Right ventricle myocardium inferior (tissue), 1 donor: ENCODE measurements at regions of chr9 and their contacts with region 1.

Region 1: GRCh38 chr9:13971966-13972655 is 341.8 kb downstream of the NFIB start:
- DNase-seq: no peak
- ATAC-seq: no peak

Region 2: GRCh38 chr9:13705918-13706317 is 266.2 kb before region 1 on chr9:
- intact Hi-C with region 1: loop called (anchors 10 kb)
- DNase-seq: no peak
- ATAC-seq: peak; percentile 97

Region 3: DNA sequence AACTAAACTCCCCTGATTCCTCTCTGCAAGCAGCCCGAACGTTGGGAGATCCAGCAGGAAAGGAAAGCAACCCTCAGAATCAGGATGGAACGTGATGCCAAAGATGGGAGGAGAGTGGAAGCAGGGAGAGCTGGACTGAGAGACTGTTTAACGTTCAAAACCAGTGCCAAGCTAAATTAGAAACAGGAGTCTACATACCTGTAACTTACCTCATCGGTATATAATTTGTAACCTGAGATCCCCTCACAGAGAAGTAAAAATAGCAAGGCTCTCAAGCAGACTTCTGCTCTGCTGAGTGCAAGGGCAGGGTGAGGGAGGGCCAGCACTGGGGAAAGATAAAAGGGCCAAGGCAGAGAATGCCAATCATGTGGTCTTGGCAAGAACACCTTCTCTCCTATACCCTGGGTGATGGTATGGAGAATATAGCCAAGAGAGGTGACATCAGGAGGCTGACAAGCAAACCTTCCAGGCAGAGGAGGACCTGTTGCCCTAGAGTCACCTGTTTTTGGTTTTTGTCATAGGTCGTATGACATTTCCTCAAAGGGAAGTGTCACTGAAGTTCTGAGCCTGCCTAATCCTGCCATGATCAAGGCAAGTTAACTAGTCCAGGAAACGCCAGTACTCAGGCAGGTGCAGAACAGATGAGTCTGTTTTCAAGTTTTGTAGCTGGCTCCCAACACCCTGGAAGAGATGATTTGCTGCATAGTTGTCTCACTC is 130.2 kb before region 1 on chr9:
- intact Hi-C with region 1: no loop called
- DNase-seq: peak; percentile 49
- ATAC-seq: peak; percentile 92

Region 4: GRCh38 chr9:13857521-13857920 is 114.6 kb before region 1 on chr9:
- intact Hi-C with region 1: loop called (anchors 10 kb)
- DNase-seq: no peak
- ATAC-seq: no peak

Region 5: GRCh38 chr9:13939134-13939533 is 33.0 kb before region 1 on chr9:
- intact Hi-C with region 1: no loop called
- DNase-seq: no peak
- ATAC-seq: peak; percentile 85

Region 6: DNA sequence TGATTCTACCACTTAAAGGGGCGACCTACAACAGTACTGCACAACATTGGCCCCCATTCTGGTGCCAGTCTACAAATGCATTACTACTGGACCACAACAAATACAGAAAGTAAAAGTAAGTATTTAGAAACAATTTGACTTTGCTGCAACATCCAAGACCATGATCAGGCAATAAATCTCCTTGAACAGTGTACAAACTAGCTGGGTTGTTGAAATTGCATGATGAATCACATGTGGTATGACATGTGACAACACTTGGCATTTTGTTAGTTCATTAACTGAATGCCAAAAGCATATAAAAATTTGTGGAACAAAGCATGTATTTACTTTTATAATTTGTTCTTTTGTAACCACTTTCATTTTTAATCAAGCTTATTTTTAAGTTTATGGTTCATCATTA is 71.4 kb after region 1 on chr9:
- intact Hi-C with region 1: loop called (anchors 10 kb)
- DNase-seq: no peak
- ATAC-seq: no peak

Region 7: DNA sequence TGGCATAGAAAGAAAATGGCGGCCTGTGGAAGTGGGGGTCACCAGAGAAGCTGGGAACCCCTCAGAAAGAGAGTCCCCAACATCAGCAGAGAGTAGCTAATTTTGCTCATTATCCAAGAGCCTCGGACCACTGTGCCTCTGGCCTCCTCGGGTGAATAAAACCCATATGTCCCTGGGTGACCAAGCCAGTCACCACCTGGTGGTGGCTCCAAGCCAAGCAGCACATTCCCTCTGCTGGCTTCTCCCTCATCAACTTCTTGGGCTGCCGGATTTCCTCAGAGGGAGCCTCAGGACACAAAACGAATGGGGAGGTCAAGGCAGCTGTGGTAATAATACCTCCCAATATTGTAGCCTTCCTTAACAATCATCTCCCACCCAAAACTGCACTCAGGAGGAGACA is 99.4 kb after region 1 on chr9:
- intact Hi-C with region 1: no loop called
- DNase-seq: no peak
- ATAC-seq: no peak

Region 8: DNA sequence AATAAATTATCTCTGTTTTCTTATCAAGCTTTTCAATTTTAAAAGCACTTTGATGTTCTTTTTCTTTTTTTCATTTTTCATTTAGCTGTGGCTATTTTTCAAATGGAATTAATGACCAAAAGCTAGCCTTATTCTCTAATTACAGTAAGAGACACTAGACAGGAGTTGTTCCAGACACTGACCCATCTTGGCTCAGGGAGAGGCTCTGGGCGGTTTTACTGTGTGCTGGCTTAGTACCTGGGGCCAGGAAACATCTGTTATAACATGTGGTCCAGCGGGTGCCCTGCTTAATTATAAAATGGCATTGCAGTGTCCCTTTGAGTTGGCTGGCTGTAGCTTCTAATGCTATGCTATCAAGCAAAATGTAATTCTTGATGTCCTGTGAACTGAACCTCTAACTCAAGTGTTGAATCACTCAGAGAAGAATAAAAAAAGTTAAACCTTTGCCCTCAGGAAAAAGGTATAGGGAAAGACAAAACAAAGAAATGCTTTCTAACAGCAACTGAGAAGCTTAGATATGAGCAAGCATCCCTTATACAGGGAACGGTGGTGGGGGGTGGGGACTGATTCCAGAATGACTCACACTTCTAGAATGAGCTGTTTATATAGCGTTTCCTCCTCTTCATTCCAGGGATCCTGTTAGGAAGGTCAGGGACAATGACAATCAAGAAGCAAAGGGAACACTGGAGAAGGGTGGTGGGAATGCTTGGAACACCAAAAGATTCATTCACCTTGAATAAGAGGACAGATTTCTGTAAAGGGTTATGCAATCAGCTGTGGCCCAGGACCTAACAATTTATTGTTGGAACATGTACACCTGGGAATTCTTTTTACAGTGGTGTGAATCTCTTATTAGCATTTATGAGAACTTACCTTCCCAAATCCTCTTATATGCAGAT is 400.6 kb after region 1 on chr9:
- intact Hi-C with region 1: no loop called
- DNase-seq: no peak
- ATAC-seq: peak; percentile 72